Activated CD4-positive, alpha-beta memory T cell treated with anti-CD3 and anti-CD28 coated beads for 36 hours (primary cell): ENCODE measurements at regions of chr15 and their contacts with region 1.

Region 1: DNA sequence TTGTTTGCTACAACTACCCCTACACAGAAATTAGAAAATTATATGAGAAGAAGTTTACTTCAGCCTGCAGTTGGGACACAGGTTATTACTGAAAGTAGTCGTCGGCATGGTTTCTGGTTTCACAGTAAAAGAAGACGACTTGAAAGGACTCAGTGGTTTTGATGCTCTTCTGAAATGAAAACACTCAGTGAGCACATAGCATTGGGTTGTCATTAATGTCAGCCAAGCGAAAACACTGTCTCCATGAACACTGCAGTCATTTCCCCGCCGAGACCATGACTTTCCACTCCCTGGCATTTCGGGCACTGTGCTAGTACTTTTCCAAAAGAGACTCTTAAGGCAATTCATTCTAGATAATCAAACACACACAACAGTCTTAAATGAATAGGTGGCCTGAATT is 69.2 kb upstream of the ICE2 start:
- DNase-seq: peak; percentile 88
- H3K4me3 Mint-ChIP-seq: peak overlapping the region; percentile 60
- H3K27ac Mint-ChIP-seq: peak overlapping the region; percentile 88
- H3K4me1 Mint-ChIP-seq: peaks cover 98% of the 10 kb centered on the region
- H3K27me3 Mint-ChIP-seq: no peaks in the 10 kb centered on the region

Region 2: GRCh38 chr15:60478566-60479360 is 69.3 kb before region 1 on chr15 and contains the start of gene ICE2:
- CTCF ChIA-PET with region 1: interaction called, 3 read pairs
- POLR2A ChIA-PET with region 1: no interaction called
- intact Hi-C with region 1: loop called (anchors 2 kb)
- DNase-seq: peak; percentile 98
- H3K4me3 Mint-ChIP-seq: peak within 1 kb of the TSS; percentile 99
- H3K27ac Mint-ChIP-seq: peak within 1 kb of the TSS; percentile 98
- H3K4me1 Mint-ChIP-seq: peaks cover 55% of the 10 kb centered on the region
- H3K27me3 Mint-ChIP-seq: no peaks in the 10 kb centered on the region
- total RNA-seq, gene ICE2: 66.0 to 71.3 TPM

Region 3: GRCh38 chr15:60520825-60521368 is 27.2 kb before region 1 on chr15:
- CTCF ChIA-PET with region 1: interaction called, 82 read pairs
- POLR2A ChIA-PET with region 1: interaction called, 21 read pairs
- intact Hi-C with region 1: loop called (anchors 1 kb)
- DNase-seq: peak; percentile 88
- H3K4me3 Mint-ChIP-seq: peak overlapping the region; percentile 20
- H3K27ac Mint-ChIP-seq: peak overlapping the region; percentile 56
- H3K4me1 Mint-ChIP-seq: peaks cover 60% of the 10 kb centered on the region
- H3K27me3 Mint-ChIP-seq: no peaks in the 10 kb centered on the region

Region 4: DNA sequence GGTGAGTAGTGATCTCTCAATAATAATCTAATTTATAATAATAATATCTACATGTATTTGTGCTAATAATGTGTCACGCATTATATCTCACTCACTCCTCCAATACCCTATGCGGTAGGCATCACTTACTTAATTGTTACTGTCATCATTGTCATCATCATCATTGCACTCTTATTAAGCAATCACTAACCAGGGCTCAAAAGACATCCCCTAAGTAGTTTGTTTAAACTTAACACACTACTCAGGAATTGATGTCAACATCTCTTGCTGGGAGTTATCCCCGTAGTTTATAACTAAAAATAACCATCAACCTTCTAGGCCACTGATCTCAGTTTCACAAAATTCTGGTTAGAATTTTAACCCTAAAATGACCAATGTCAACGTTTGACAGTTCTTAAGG is 12.4 kb before region 1 on chr15:
- CTCF ChIA-PET with region 1: interaction called, 6 read pairs
- POLR2A ChIA-PET with region 1: interaction called, 25 read pairs
- intact Hi-C with region 1: loop called (anchors 1 kb)
- DNase-seq: no peak
- H3K4me3 Mint-ChIP-seq: no peak overlapping the region
- H3K27ac Mint-ChIP-seq: no peak overlapping the region
- H3K4me1 Mint-ChIP-seq: peaks cover 87% of the 10 kb centered on the region
- H3K27me3 Mint-ChIP-seq: no peaks in the 10 kb centered on the region

Region 5: DNA sequence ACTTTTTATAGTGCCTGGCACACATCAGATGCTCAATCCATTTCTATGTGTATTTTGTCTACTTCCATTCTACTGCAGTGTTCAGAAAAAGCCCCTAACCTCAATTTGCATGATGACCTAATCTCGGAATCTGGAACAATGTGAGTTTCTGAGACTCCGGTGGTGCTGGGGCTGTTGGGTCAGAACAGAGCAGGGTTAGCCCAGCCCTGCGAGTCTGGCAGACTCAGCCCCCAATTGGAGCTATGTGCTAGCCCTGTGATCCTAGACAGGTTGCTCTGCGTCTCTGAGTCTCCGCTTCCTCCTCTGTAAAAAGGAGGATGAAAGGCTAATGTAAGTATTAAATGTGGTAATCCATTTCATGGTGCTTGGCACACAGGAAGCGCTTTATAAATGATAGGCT is 25.8 kb after region 1 on chr15:
- CTCF ChIA-PET with region 1: interaction called, 88 read pairs
- POLR2A ChIA-PET with region 1: interaction called, 45 read pairs
- intact Hi-C with region 1: loop called (anchors 1 kb)
- DNase-seq: peak; percentile 68
- H3K4me3 Mint-ChIP-seq: peak overlapping the region; percentile 64
- H3K27ac Mint-ChIP-seq: peak overlapping the region; percentile 85
- H3K4me1 Mint-ChIP-seq: peaks cover 88% of the 10 kb centered on the region
- H3K27me3 Mint-ChIP-seq: no peaks in the 10 kb centered on the region

Region 6: GRCh38 chr15:60798821-60799220 is 250.7 kb after region 1 on chr15:
- CTCF ChIA-PET with region 1: interaction called, 3 read pairs
- POLR2A ChIA-PET with region 1: no interaction called
- intact Hi-C with region 1: loop called (anchors 2 kb)
- DNase-seq: peak; percentile 84
- H3K4me3 Mint-ChIP-seq: peak overlapping the region; percentile 28
- H3K27ac Mint-ChIP-seq: peak overlapping the region; percentile 82
- H3K4me1 Mint-ChIP-seq: peaks cover 90% of the 10 kb centered on the region
- H3K27me3 Mint-ChIP-seq: no peaks in the 10 kb centered on the region